Posterior vena cava (tissue), 2 donors: ENCODE measurements at regions of chr15 and their contacts with region 1.

Region 1: DNA sequence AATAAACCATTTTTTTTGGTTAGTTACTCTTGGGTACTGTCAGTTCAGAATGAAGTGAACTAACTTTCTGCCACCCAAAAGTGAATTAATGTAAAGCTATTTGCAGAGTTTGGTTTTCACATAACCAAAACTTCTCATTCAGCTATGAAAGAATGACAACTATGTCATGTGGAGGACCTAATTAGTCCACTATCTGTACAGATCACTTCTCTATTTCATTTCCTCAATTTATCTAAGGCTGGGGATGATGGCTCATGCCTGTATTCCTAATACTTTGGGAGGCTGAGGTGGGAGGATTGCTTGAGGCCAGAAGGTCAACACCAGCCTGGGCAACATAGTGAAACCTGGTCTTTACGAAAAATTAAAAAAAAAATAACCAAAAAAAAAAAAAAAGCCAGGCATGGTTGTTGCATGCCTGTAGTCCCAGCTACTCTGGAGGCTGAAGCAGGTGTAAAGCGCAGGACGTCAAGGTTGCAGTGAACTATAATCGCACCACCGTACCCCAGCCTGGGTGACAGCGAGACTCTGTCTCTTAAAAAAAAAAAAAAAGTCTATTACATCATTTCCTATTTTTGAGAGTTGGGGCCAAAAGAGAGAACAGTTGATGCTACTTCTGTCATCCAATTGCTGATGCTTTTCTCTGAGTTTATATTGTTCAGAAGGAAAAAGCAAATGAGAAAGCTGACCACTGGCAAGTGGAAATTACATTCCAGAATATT is 8.7 kb downstream of the HYPK start:
- DNase-seq: no peak

Region 2: DNA sequence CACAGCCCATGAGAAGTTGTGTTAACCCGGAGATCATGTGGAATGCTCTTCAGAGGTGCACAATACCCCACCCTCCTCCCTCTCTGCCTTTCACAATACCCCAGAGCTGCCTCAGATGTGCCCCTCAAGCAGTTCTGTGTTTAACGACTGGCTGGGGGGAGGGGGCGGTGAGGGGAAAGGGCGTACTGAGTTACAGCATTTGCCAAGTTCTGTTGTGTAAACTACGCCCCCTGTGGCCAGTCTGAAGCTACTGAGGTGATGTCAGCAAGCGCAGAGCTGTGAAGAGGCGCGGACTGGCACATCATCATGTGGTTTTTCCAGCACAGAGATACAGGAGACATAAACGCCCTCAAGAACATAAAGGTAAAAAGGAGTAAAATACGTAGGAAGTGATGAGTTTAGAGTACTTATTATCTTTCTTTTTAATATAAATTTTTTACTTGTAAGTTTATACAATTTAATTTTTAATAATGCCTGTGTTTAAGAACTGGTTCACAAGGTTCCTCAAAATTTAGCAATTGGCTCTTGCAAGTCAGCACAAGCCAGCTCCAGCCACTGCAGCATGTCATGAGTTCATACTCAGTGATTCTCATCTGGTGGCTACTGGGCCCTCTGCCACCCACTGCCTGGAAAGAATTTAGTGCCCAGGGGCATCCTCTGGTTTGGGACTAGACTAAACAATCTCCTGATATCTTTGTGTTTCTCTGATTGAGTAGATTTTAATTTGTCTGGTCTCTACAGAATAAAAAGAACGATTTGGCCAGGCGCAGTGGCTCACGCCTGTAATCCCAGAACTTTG is 590.0 kb before region 1 on chr15:
- intact Hi-C with region 1: loop called in 1 of 2 experiments (anchors 5 kb)
- DNase-seq: peak; percentile 76

Region 3: GRCh38 chr15:43824302-43825246 is 15.5 kb after region 1 on chr15 and contains the start of gene MFAP1:
- intact Hi-C with region 1: loop called in 1 of 2 experiments (anchors 1 kb)
- DNase-seq: peak; percentile 97
- total RNA-seq, gene MFAP1: 16.6 to 17.7 TPM